Activated CD8-positive, alpha-beta T cell treated with anti-CD3 and anti-CD28 coated beads for 36 hours (primary cell): ENCODE measurements at regions of chr6 and their contacts with region 1.

Region 1: GRCh38 chr6:32529697-32530429 is at the start of gene HLA-DRB5:
- DNase-seq: peak; percentile 14
- ATAC-seq: peak; percentile 64
- H3K4me3 Mint-ChIP-seq: peak within 1 kb of the TSS; percentile 56
- H3K27ac Mint-ChIP-seq: no peak within 1 kb of the TSS
- H3K4me1 Mint-ChIP-seq: peaks cover 3% of the 10 kb centered on the region
- H3K27me3 Mint-ChIP-seq: peaks cover 4% of the 10 kb centered on the region
- CTCF ChIP-seq: no peak
- total RNA-seq, gene HLA-DRB5: 4.9 to 5.9 TPM

Region 2: GRCh38 chr6:32589598-32590449 is 60.0 kb after region 1 on chr6 and contains the start of gene HLA-DRB1:
- CTCF ChIA-PET with region 1: no interaction called
- POLR2A ChIA-PET with region 1: no interaction called
- intact Hi-C with region 1: loop called (anchors 5 kb)
- DNase-seq: peak; percentile 15
- ATAC-seq: peak; percentile 90
- H3K4me3 Mint-ChIP-seq: peak within 1 kb of the TSS; percentile 67
- H3K27ac Mint-ChIP-seq: peak within 1 kb of the TSS; percentile 69
- H3K4me1 Mint-ChIP-seq: peaks cover 6% of the 10 kb centered on the region
- H3K27me3 Mint-ChIP-seq: no peaks in the 10 kb centered on the region
- CTCF ChIP-seq: no peak
- total RNA-seq, gene HLA-DRB1: 21.8 to 22.7 TPM

Region 3: GRCh38 chr6:32666420-32667300 is 136.8 kb after region 1 on chr6 and contains the start of gene HLA-DQB1:
- CTCF ChIA-PET with region 1: no interaction called
- POLR2A ChIA-PET with region 1: no interaction called
- intact Hi-C with region 1: no loop called
- DNase-seq: peak; percentile 69
- ATAC-seq: peak; percentile 87
- H3K4me3 Mint-ChIP-seq: peak within 1 kb of the TSS; percentile 75
- H3K27ac Mint-ChIP-seq: peak within 1 kb of the TSS; percentile 35
- H3K4me1 Mint-ChIP-seq: peaks cover 35% of the 10 kb centered on the region
- H3K27me3 Mint-ChIP-seq: peaks cover 36% of the 10 kb centered on the region
- CTCF ChIP-seq: no peak
- total RNA-seq, gene HLA-DQB1: 5.3 to 6.9 TPM

Region 4: GRCh38 chr6:32741031-32741960 is 211.4 kb after region 1 on chr6 and contains the start of gene HLA-DQA2:
- CTCF ChIA-PET with region 1: no interaction called
- POLR2A ChIA-PET with region 1: no interaction called
- intact Hi-C with region 1: no loop called
- DNase-seq: no peak
- ATAC-seq: no peak
- H3K4me3 Mint-ChIP-seq: no peak within 1 kb of the TSS
- H3K27ac Mint-ChIP-seq: no peak within 1 kb of the TSS
- H3K4me1 Mint-ChIP-seq: peaks cover 2% of the 10 kb centered on the region
- H3K27me3 Mint-ChIP-seq: peaks cover 21% of the 10 kb centered on the region
- CTCF ChIP-seq: no peak
- total RNA-seq, gene HLA-DQA2: 0.18 TPM in 1 of 2 experiments, not detected in the other